GM18951 (cell line): ENCODE measurements at regions of chr11 and their contacts with region 1.

Region 1: GRCh38 chr11:22169833-22170232 is 23.1 kb upstream of the ANO5 start:
- POLR2A ChIP-seq: no peak

Region 2: DNA sequence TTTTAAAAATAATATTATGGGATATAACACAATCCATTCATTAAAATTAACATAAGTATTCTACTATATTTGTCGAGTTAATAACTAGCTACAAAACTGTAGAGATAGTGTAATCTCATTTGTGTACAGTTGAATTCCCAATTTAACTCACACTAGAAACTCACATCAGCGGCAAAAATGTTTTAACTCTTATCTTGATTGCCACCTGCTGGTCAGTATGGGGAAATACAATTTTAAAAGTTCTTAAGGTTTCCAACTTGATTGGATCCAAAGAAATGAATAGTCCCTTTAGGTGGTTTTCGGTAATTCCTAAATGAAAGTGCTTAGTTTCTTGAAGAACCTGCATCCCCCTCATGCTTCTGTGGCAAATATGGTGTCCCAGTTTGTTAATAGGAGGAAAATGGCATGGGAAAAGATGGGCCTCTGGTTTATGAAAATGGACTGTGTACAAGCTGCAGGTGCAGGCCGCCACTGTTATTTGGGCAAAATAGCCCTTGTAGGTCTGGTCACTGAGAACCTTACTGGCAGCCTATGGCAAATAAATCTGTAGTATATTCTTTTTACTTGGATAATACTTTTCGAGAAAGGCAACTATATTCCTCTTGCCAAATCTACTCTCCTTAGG is 134.6 kb after region 1 on chr11:
- in situ Hi-C with region 1: loop called (anchors 25 kb)
- POLR2A ChIP-seq: no peak